ENCODE measurements at regions of chr12 and their contacts with region 1.

Region 1: DNA sequence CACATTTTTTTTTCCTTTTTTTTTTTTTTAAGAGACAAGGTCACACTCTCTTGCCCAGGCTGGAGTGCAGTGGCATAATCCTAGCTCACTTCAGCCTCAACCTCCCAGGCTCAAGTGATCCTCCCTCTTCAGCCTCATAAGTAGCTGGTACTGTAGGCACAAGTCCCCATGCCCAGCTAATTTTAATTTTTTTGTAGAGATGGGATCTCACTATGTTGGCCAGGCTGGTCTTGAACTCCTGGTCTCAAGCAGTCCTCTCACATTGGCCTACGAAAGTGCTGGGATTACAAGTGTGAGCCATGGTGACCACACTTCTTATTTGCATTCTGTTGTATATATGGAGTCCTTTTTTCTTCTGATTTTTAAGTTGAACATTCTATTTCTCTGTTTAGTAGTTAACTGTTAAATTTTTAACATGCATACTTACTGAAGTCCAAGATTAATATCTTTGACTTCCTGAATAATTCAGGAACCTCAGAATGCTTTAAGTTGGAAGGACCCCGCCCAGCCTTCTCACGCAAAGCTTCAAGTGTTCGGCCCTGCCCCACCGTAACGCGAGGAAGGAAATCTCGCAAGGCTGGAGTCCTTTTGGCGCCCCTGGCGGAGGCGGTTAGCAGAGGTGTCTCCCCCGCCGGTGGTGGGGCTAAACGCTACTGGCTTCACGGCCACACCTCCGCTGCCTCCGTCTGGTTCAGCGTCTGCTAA is 21.6 kb downstream of the SPATS2 start:
- DNase-seq: peak; percentile 81
- ATAC-seq: peak; percentile 98
- H3K4me3 Mint-ChIP-seq: no peak overlapping the region
- H3K27ac Mint-ChIP-seq: no peak overlapping the region
- H3K4me1 Mint-ChIP-seq: peaks cover 4% of the 10 kb centered on the region
- H3K27me3 Mint-ChIP-seq: no peaks in the 10 kb centered on the region
- CTCF ChIP-seq: peak; percentile 58

Region 2: GRCh38 chr12:49400304-49400703 is 11.5 kb after region 1 on chr12:
- CTCF ChIA-PET with region 1: interaction called, 16 read pairs
- POLR2A ChIA-PET with region 1: no interaction called
- intact Hi-C with region 1: no loop called
- DNase-seq: no peak
- ATAC-seq: no peak
- H3K4me3 Mint-ChIP-seq: no peak overlapping the region
- H3K27ac Mint-ChIP-seq: no peak overlapping the region
- H3K4me1 Mint-ChIP-seq: peaks cover 5% of the 10 kb centered on the region
- H3K27me3 Mint-ChIP-seq: no peaks in the 10 kb centered on the region
- CTCF ChIP-seq: no peak

Region 3: DNA sequence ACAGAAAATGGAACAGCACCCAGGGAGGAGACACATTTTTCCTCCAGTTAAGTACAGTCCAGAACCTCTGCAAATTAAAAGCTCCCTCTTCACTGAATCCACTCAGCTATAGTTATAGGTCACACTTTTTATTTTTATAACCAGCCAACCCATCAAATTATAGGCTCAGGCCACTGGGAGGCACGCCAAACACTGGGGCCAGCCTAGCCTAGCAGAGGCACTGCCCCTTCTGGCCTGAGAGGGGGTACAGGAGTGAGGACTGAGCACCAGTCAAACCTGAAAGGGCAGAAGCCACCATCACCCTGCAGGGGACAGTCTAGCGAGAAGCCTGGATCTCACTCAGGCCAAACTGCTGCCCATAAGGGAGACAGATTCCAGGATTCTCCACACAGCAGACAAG is 299.1 kb after region 1 on chr12:
- CTCF ChIA-PET with region 1: no interaction called
- POLR2A ChIA-PET with region 1: no interaction called
- intact Hi-C with region 1: no loop called
- DNase-seq: no peak
- ATAC-seq: no peak
- H3K4me3 Mint-ChIP-seq: no peak overlapping the region
- H3K27ac Mint-ChIP-seq: no peak overlapping the region
- H3K4me1 Mint-ChIP-seq: peaks cover 54% of the 10 kb centered on the region
- H3K27me3 Mint-ChIP-seq: no peaks in the 10 kb centered on the region
- CTCF ChIP-seq: no peak